H1 (cell line): ENCODE measurements at regions of chr5 and their contacts with region 1.

Region 1: GRCh38 chr5:172714491-172715421 is 56.2 kb downstream of the DUSP1 start:
- DNase-seq: peak in 1 of 2 experiments; percentile 88
- H3K4me3 ChIP-seq: no peak overlapping the region
- H3K27ac ChIP-seq: no peak overlapping the region
- H3K4me1 ChIP-seq: peaks cover 0 to 3% (median 2%) of the 10 kb centered on the region in 4 experiments; a peak in 2 of 7 replicates
- H3K27me3 ChIP-seq: peaks cover 0 to 11% (median 7%) of the 10 kb centered on the region in 4 experiments; a peak in 4 of 7 replicates
- CTCF ChIP-seq: peak in 2 of 3 experiments; percentile 80 to 91; a peak in 3 of 4 replicates
- EP300 ChIP-seq: no peak
- POLR2A ChIP-seq: no peak
- RAD21 ChIP-seq: peak; percentile 51 to 70

Region 2: GRCh38 chr5:172223901-172224873 is 490.6 kb before region 1 on chr5:
- CTCF ChIA-PET with region 1: no interaction called
- POLR2A ChIA-PET with region 1: no interaction called
- DNase-seq: no peak
- H3K4me3 ChIP-seq: no peak overlapping the region
- H3K27ac ChIP-seq: no peak overlapping the region
- H3K4me1 ChIP-seq: peaks cover 0 to 3% (median 0%) of the 10 kb centered on the region in 4 experiments; a peak in 1 of 7 replicates
- H3K27me3 ChIP-seq: no peaks in the 10 kb centered on the region
- CTCF ChIP-seq: no peak
- EP300 ChIP-seq: no peak
- POLR2A ChIP-seq: no peak
- RAD21 ChIP-seq: no peak

Region 3: DNA sequence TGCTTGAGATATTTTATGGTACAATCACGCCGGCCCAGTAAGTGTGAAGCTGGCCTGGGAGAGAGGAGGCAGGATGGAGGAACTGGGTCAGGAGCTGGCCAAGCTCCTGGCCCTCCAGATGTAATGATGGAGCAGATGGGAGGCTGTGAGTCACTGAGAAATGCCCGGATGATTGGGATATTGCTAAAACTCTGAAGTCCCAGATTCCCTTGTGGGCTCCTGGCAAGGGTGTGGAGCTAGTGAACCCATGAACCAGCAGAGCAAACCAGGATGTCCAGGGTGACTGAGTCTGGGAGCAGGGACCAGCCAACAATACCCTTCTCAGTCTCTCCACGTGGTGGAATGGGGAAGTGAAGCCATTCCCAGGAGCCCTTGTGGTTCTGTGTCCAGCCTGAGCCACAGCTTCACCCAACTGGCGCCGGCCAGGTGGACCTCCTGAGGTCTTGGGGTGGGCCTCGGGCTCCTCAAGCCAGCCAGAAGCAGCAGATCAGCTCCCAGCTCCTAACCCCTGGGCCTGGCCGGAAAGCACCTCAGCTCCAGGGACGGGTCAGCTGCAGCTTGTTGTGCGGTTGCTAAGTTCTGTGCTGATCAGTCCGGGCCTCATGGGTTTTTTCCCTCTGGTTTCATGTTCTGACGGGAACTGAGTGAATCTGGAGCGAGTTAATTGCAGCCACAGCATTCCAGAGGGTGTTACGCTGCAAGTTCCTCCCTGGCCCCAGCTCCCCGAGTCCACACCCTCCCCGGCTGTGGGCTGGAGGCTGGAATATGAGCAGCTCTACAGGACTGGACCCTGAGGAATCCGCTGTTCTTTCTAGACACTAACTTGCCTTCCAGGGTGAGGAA is 18.6 kb after region 1 on chr5:
- CTCF ChIA-PET with region 1: interaction called, 29 read pairs
- POLR2A ChIA-PET with region 1: interaction called, 3 read pairs
- DNase-seq: no peak
- H3K4me3 ChIP-seq: no peak overlapping the region
- H3K27ac ChIP-seq: no peak overlapping the region
- H3K4me1 ChIP-seq: no peaks in the 10 kb centered on the region; a peak in 1 of 7 replicates
- H3K27me3 ChIP-seq: peaks cover 0 to 2% (median 0%) of the 10 kb centered on the region in 4 experiments; a peak in 1 of 7 replicates
- CTCF ChIP-seq: no peak
- EP300 ChIP-seq: no peak
- POLR2A ChIP-seq: no peak
- RAD21 ChIP-seq: no peak

Region 4: GRCh38 chr5:172764849-172765765 is 50.4 kb after region 1 on chr5:
- CTCF ChIA-PET with region 1: interaction called, 50 read pairs
- POLR2A ChIA-PET with region 1: interaction called, 28 read pairs
- DNase-seq: peak; percentile 82 to 90
- H3K4me3 ChIP-seq: peak overlapping the region; percentile 30 to 56 (median 43); a peak in 7 of 8 replicates
- H3K27ac ChIP-seq: peak overlapping the region; percentile 91
- H3K4me1 ChIP-seq: peaks cover 3 to 20% (median 10%) of the 10 kb centered on the region in 4 experiments; a peak in 6 of 7 replicates
- H3K27me3 ChIP-seq: peaks cover 0 to 7% (median 5%) of the 10 kb centered on the region in 4 experiments; a peak in 4 of 7 replicates
- CTCF ChIP-seq: no peak
- EP300 ChIP-seq: peak in 1 of 2 experiments; percentile 93; a peak in 2 of 3 replicates
- POLR2A ChIP-seq: peak in 1 of 2 experiments; percentile 81; a peak in 1 of 3 replicates
- RAD21 ChIP-seq: no peak; a peak in 1 of 4 replicates

Region 5: GRCh38 chr5:172777881-172778814 is 63.4 kb after region 1 on chr5:
- CTCF ChIA-PET with region 1: interaction called, 50 read pairs
- POLR2A ChIA-PET with region 1: no interaction called
- DNase-seq: no peak
- H3K4me3 ChIP-seq: no peak overlapping the region
- H3K27ac ChIP-seq: no peak overlapping the region
- H3K4me1 ChIP-seq: no peaks in the 10 kb centered on the region
- H3K27me3 ChIP-seq: peaks cover 0 to 8% (median 6%) of the 10 kb centered on the region in 4 experiments; a peak in 5 of 7 replicates
- CTCF ChIP-seq: no peak
- EP300 ChIP-seq: no peak
- POLR2A ChIP-seq: no peak
- RAD21 ChIP-seq: no peak

Region 6: DNA sequence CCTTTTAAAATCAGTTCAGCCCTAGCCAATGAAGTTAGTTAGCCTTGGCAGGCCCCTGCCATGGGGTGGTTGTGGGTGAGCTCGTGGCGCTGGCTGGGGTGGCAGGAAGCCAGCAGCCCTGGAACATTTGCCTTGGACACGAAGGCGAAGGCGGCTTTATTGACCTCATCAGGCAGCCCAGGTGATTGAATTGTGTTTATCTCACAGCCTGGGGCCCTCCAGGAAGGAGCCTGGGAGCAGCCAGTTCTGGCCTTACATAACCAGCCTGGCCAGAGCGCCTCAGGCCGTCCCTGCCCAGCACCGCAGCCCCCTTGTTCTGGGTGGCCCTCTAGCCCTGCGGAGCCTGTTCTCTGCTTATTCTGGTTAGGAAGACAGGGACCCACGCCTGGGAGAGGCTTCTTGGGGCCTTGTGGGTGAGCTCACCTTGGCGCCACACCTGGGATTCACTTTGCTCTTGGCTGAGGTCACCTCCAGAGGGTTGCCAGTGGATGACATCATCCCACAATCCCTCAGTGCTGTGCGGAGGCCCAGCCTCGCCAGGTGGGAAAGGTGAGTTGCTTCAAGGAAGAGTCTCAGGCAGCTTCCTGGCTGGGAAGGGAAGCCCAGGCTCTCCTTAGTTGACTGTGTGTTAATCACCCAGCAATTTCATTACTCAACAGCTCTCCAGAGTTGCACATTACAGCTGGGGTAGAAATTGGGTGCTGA is 190.0 kb after region 1 on chr5:
- CTCF ChIA-PET with region 1: interaction called, 31 read pairs
- POLR2A ChIA-PET with region 1: no interaction called
- DNase-seq: no peak
- H3K4me3 ChIP-seq: no peak overlapping the region
- H3K27ac ChIP-seq: no peak overlapping the region
- H3K4me1 ChIP-seq: peaks cover 0 to 9% (median 4%) of the 10 kb centered on the region in 4 experiments; a peak in 5 of 7 replicates
- H3K27me3 ChIP-seq: no peaks in the 10 kb centered on the region
- CTCF ChIP-seq: no peak
- EP300 ChIP-seq: no peak
- POLR2A ChIP-seq: no peak
- RAD21 ChIP-seq: no peak

Region 7: DNA sequence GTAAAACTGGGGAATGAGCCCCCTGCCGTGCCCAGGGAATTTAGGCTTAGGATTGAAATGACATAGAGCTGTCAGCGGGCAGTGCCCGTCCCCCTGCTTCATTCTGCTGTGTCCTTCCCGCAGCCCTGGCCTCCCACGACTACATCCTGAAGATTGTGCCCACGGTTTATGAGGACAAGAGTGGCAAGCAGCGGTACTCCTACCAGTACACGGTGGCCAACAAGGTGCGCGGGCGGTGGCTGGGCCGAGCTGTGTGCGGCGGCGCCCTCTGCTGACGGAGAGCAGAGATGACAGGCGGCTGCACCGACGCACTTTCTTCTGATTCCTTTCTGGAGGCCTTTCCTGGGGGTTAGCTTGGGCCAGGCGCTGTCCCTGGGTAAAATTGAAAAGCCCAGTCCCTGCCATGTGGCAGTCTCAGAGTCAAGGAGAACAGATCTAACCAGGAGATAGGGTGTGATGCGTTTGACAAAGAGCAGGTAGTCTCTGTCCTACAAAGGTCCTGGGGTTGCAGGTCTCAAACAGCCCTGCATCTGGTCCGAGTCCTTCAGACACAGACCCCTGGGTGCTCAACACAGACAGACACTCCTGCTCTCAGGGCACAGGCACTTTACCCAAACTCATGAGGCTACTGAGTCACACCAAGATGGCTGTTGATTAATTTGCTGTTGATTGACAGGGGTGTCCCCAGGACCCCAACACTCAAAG is 217.7 kb after region 1 on chr5:
- CTCF ChIA-PET with region 1: interaction called, 206 read pairs
- POLR2A ChIA-PET with region 1: interaction called, 4 read pairs
- DNase-seq: peak in 1 of 2 experiments; percentile 84
- H3K4me3 ChIP-seq: no peak overlapping the region
- H3K27ac ChIP-seq: no peak overlapping the region
- H3K4me1 ChIP-seq: no peaks in the 10 kb centered on the region
- H3K27me3 ChIP-seq: no peaks in the 10 kb centered on the region
- CTCF ChIP-seq: peak; percentile 90 to 97 (median 94)
- EP300 ChIP-seq: no peak
- POLR2A ChIP-seq: no peak
- RAD21 ChIP-seq: peak; percentile 80 to 86

Region 8: DNA sequence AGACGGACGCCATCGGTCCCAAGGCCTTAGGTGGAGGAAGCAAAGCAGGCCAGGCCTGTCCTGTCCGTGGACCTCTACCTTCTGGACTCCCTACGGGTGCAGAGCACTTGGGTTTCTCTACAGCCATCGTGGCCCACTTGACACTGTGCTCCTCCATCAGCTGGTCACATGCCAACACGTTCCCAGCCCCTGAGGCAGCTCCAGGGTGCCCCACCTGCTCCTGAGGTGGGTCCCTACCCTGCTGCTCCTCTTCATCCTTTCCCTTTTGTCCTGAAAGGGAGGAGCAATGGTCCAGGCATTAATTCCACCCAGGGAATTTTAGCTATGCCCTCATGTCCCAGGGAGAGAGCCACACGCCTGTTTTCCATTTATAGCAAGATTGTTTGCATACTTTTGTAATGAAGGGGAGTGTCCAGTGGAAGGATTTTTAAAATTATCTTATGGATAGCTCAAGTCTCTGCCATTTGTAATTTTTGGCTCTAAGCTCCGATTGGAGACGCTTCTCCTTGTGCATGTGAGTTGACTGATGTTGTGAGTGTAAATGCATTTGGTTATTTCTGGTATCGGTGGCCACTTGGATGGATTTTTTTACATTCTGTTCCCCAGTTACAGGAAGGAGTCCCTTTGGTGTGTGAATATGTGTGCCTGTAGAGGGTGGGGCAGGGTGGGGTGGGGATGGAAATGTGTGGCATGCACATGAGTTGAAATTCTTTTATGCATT is 237.2 kb after region 1 on chr5:
- CTCF ChIA-PET with region 1: interaction called, 16 read pairs
- POLR2A ChIA-PET with region 1: no interaction called
- DNase-seq: no peak
- H3K4me3 ChIP-seq: no peak overlapping the region
- H3K27ac ChIP-seq: no peak overlapping the region
- H3K4me1 ChIP-seq: no peaks in the 10 kb centered on the region
- H3K27me3 ChIP-seq: peaks cover 0 to 2% (median under 1%) of the 10 kb centered on the region in 4 experiments; a peak in 3 of 7 replicates
- CTCF ChIP-seq: no peak
- EP300 ChIP-seq: no peak
- POLR2A ChIP-seq: no peak
- RAD21 ChIP-seq: no peak